B cell (primary cell): ENCODE measurements at regions of chr6 and their contacts with region 1.

Region 1: DNA sequence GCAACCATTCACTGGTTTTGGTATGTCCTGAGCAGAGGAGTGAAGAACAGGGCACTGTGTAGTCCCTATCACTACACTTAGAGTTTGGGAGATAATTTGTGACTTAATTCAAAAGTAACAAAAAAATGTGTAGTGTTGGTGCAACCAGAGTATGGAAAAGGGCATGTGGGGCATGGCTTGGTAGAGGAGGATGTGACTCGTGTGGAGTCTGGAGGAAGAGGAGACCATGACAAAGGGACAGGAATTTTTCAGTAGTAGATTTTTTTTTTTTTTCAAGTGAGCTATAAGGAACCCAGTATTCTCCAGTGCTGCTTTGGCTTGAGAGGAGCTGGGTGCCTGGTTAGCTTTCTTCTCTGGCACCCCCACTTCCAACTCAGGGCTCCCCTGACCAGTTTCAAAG is 5.1 kb downstream of the MTRES1 start:
- DNase-seq: no peak
- ATAC-seq: no peak
- H3K4me3 ChIP-seq: no peak overlapping the region
- H3K4me3 Mint-ChIP-seq: no peak overlapping the region
- H3K27ac ChIP-seq: no peak overlapping the region
- H3K27ac Mint-ChIP-seq: no peak overlapping the region
- H3K4me1 ChIP-seq: peaks cover 4 to 10% of the 10 kb centered on the region in 2 donors
- H3K4me1 Mint-ChIP-seq: peaks cover 20% of the 10 kb centered on the region
- H3K27me3 ChIP-seq: no peaks in the 10 kb centered on the region
- H3K27me3 Mint-ChIP-seq: no peaks in the 10 kb centered on the region
- CTCF ChIP-seq: no peak

Region 2: DNA sequence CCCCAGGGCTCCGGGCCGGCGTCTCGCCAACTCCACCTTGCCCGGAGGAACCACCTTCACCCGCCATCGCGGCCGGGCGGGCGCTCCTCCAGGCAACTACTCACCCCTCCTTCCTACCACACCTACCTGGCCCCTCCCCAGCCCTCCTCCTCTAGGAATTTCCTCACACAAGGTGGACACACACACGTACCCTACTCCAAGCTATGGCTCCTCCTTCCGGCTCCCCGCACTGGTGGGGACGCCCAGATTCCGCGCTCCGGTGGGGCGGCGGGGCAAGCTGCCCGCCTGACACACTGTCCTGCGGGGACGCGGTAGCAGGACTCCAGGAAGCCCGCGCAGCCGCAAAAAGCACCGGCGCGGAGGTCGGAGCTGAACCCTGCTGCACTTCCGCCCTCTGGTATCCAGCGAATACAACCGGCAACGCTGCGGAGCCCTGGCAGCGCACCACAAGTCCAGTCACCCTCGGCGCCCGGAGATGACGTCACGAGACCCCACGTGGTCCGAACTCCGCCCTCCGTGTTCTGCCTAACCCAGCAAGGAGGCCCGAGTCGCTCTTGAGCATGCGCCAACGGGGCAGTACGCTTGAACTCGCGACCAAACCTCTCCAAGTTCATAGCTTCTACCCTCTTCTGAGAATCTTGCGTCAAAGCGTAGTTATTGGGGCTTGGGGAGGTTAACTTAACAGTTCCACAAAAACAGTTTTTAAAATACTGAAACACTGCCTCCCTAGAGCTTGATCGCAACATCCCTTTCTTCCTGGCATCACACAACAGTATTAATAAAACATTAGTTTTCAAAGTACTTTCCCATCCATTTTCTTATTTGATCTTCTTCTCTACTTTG is 707.6 kb before region 1 on chr6 and contains the start of gene ATG5:
- CTCF ChIA-PET with region 1: no interaction called
- POLR2A ChIA-PET with region 1: no interaction called
- intact Hi-C with region 1: loop called (anchors 1 kb)
- DNase-seq: peak; percentile 99
- ATAC-seq: peak; percentile 92
- H3K4me3 ChIP-seq: peak within 1 kb of the TSS; percentile 87 to 99 (median 94)
- H3K4me3 Mint-ChIP-seq: peak within 1 kb of the TSS; percentile 100
- H3K27ac ChIP-seq: peak within 1 kb of the TSS; percentile 89 to 91
- H3K27ac Mint-ChIP-seq: peak within 1 kb of the TSS; percentile 98
- H3K4me1 ChIP-seq: peaks cover 16 to 20% of the 10 kb centered on the region in 2 donors
- H3K4me1 Mint-ChIP-seq: peaks cover 44% of the 10 kb centered on the region
- H3K27me3 ChIP-seq: peaks cover 0 to 6% (median 4%) of the 10 kb centered on the region in 4 experiments
- H3K27me3 Mint-ChIP-seq: peaks cover 27% of the 10 kb centered on the region
- CTCF ChIP-seq: no peak
- total RNA-seq, gene ATG5: 26.3 and 34.0 TPM in 2 replicates

Region 3: DNA sequence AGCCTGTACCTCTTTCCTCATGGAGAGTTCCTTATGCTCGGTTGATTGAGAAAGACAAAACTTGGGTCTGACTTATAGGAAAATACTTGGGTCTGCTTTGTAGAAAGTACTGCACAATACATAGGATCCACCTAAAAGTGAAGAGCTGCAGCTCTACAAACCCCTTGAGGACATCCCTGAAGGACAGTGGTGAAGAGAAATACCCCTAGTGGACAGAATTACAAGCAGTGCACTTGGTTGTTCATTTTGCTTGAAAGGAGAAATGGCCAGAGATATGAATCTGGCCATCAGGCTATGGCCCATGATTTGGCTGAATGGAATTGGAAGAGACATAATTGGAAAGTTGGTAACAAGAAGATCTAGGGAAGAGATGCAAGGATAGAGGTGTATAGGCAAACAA is 66.9 kb before region 1 on chr6:
- CTCF ChIA-PET with region 1: no interaction called
- POLR2A ChIA-PET with region 1: no interaction called
- intact Hi-C with region 1: no loop called
- DNase-seq: no peak
- ATAC-seq: no peak
- H3K4me3 ChIP-seq: no peak overlapping the region
- H3K4me3 Mint-ChIP-seq: no peak overlapping the region
- H3K27ac ChIP-seq: no peak overlapping the region
- H3K27ac Mint-ChIP-seq: no peak overlapping the region
- H3K4me1 ChIP-seq: peaks cover 0 to 2% of the 10 kb centered on the region in 2 donors
- H3K4me1 Mint-ChIP-seq: peaks cover 12% of the 10 kb centered on the region
- H3K27me3 ChIP-seq: no peaks in the 10 kb centered on the region
- H3K27me3 Mint-ChIP-seq: no peaks in the 10 kb centered on the region
- CTCF ChIP-seq: no peak

Region 4: DNA sequence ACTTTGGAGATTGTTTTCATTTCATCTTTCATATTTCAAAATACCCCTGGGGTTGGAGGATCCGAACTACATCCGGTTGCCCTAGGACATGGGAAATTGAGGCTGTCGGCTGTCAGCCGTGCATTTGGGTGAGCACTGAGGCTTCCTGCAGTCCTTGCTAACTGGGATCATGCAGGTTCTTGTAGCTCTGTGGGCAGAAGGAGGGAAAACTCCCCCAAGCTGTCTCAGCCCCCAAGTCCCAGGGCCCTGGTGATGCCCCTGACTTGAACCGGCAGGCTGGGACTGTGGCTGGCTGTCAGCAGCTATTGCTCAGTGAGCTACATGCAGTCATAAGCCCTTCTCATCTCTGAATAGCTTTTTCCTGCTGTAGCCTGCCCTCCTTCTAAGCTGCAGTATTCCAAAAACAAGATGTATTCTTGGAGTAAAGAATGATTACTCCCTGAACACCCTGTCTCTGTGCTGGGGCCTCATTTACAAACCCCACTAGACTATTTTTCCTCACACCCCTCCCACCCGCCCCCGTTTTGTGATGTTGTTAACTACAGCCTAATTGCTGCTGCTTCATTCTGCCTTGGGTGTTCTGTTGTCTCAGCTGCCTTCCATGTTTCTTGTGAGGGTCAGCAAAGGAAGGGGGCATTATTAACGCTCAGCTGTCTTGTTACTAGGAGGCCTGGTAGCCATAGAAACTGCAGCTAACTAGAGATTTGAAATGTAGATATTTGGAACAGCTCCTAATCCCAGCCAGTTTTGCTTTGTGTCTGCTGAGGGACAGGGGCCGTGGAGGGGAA is 12.9 kb after region 1 on chr6:
- CTCF ChIA-PET with region 1: no interaction called
- POLR2A ChIA-PET with region 1: interaction called, 14 read pairs
- intact Hi-C with region 1: no loop called
- DNase-seq: no peak
- ATAC-seq: no peak
- H3K4me3 ChIP-seq: no peak overlapping the region
- H3K4me3 Mint-ChIP-seq: no peak overlapping the region
- H3K27ac ChIP-seq: no peak overlapping the region
- H3K27ac Mint-ChIP-seq: no peak overlapping the region
- H3K4me1 ChIP-seq: no peaks in the 10 kb centered on the region
- H3K4me1 Mint-ChIP-seq: peaks cover 3% of the 10 kb centered on the region
- H3K27me3 ChIP-seq: no peaks in the 10 kb centered on the region
- H3K27me3 Mint-ChIP-seq: no peaks in the 10 kb centered on the region
- CTCF ChIP-seq: no peak